ENCODE measurements at regions of chr10 and their contacts with region 1.

Region 1: GRCh38 chr10:70549962-70550458 is 52.5 kb downstream of the PRF1 start:
- DNase-seq: peak; percentile 15 to 56
- ATAC-seq: peak; percentile 54 to 81
- H3K4me3 ChIP-seq: no peak overlapping the region
- H3K27ac ChIP-seq: no peak overlapping the region
- H3K4me1 ChIP-seq: no peaks in the 10 kb centered on the region
- H3K27me3 ChIP-seq: no peaks in the 10 kb centered on the region
- CTCF ChIP-seq: peak; percentile 77 to 90 (median 83)
- POLR2A ChIP-seq: no peak

Region 2: GRCh38 chr10:70758757-70759514 is 208.9 kb after region 1 on chr10:
- in situ Hi-C with region 1: loop called (anchors 5 to 10 kb)
- intact Hi-C with region 1: loop called (anchors 1 kb)
- DNase-seq: peak; percentile 34 to 45
- ATAC-seq: peak; percentile 65 to 89
- H3K4me3 ChIP-seq: no peak overlapping the region
- H3K27ac ChIP-seq: no peak overlapping the region
- H3K4me1 ChIP-seq: no peaks in the 10 kb centered on the region
- H3K27me3 ChIP-seq: no peaks in the 10 kb centered on the region
- CTCF ChIP-seq: peak; percentile 30 to 77 (median 66)
- POLR2A ChIP-seq: no peak

Region 3: DNA sequence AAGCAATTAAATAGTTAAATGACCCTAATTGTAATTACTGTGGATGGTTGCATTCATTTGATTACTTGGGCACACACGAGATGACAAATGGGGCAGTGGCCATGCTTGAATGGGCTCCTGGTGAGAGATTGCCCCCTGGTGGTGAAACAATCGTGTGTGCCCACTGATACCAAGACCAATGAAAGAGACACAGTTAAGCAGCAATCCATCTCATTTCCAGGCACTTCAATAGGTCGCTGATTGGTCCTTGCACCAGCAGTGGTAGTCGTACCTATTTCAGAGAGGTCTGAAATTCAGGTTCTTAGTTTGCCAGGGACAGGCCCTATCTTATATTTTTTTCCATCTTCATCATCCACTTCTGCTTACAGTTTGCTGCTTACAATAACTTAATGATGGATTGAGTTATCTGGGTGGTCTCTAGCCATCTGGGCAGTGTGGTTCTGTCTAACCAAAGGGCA is 330.1 kb after region 1 on chr10:
- in situ Hi-C with region 1: loop called in 2 of 4 experiments (anchors 5 to 10 kb)
- intact Hi-C with region 1: loop called (anchors 5 kb)
- DNase-seq: peak; percentile 54 to 73
- ATAC-seq: peak; percentile 91 to 92
- H3K4me3 ChIP-seq: no peak overlapping the region
- H3K27ac ChIP-seq: no peak overlapping the region
- H3K4me1 ChIP-seq: no peaks in the 10 kb centered on the region
- H3K27me3 ChIP-seq: no peaks in the 10 kb centered on the region
- CTCF ChIP-seq: peak; percentile 88 to 94 (median 91)
- POLR2A ChIP-seq: no peak